ENCODE measurements at regions of chr16 and their contacts with region 1.

Region 1: GRCh38 chr16:30813821-30814189 is 26.8 kb upstream of the ZNF629 start:
- DNase-seq: no peak
- H3K4me3 Mint-ChIP-seq: peak overlapping the region; percentile 77
- H3K27ac Mint-ChIP-seq: no peak overlapping the region
- H3K4me1 Mint-ChIP-seq: no peaks in the 10 kb centered on the region
- H3K27me3 Mint-ChIP-seq: no peaks in the 10 kb centered on the region
- CTCF ChIP-seq: no peak

Region 2: GRCh38 chr16:30747799-30748634 is 65.8 kb before region 1 on chr16 and contains the start of gene PHKG2:
- CTCF ChIA-PET with region 1: no interaction called
- POLR2A ChIA-PET with region 1: interaction called, 12 read pairs
- intact Hi-C with region 1: no loop called
- DNase-seq: peak; percentile 99
- H3K4me3 Mint-ChIP-seq: peak within 1 kb of the TSS; percentile 87
- H3K27ac Mint-ChIP-seq: peak within 1 kb of the TSS; percentile 86
- H3K4me1 Mint-ChIP-seq: peaks cover 30% of the 10 kb centered on the region
- H3K27me3 Mint-ChIP-seq: no peaks in the 10 kb centered on the region
- CTCF ChIP-seq: no peak
- total RNA-seq, gene PHKG2: 28.0 and 28.4 TPM in 2 replicates

Region 3: GRCh38 chr16:30775392-30776188 is 38.2 kb before region 1 on chr16:
- CTCF ChIA-PET with region 1: interaction called, 7 read pairs
- POLR2A ChIA-PET with region 1: interaction called, 5 read pairs
- intact Hi-C with region 1: loop called (anchors 5 kb)
- DNase-seq: peak; percentile 87
- H3K4me3 Mint-ChIP-seq: peak overlapping the region; percentile 85
- H3K27ac Mint-ChIP-seq: peak overlapping the region; percentile 82
- H3K4me1 Mint-ChIP-seq: peaks cover 22% of the 10 kb centered on the region
- H3K27me3 Mint-ChIP-seq: no peaks in the 10 kb centered on the region
- CTCF ChIP-seq: no peak

Region 4: GRCh38 chr16:30797670-30798309 is 16.0 kb before region 1 on chr16:
- CTCF ChIA-PET with region 1: interaction called, 47 read pairs
- POLR2A ChIA-PET with region 1: interaction called, 6 read pairs
- intact Hi-C with region 1: no loop called
- DNase-seq: no peak
- H3K4me3 Mint-ChIP-seq: no peak overlapping the region
- H3K27ac Mint-ChIP-seq: no peak overlapping the region
- H3K4me1 Mint-ChIP-seq: peaks cover 7% of the 10 kb centered on the region
- H3K27me3 Mint-ChIP-seq: no peaks in the 10 kb centered on the region
- CTCF ChIP-seq: no peak

Region 5: DNA sequence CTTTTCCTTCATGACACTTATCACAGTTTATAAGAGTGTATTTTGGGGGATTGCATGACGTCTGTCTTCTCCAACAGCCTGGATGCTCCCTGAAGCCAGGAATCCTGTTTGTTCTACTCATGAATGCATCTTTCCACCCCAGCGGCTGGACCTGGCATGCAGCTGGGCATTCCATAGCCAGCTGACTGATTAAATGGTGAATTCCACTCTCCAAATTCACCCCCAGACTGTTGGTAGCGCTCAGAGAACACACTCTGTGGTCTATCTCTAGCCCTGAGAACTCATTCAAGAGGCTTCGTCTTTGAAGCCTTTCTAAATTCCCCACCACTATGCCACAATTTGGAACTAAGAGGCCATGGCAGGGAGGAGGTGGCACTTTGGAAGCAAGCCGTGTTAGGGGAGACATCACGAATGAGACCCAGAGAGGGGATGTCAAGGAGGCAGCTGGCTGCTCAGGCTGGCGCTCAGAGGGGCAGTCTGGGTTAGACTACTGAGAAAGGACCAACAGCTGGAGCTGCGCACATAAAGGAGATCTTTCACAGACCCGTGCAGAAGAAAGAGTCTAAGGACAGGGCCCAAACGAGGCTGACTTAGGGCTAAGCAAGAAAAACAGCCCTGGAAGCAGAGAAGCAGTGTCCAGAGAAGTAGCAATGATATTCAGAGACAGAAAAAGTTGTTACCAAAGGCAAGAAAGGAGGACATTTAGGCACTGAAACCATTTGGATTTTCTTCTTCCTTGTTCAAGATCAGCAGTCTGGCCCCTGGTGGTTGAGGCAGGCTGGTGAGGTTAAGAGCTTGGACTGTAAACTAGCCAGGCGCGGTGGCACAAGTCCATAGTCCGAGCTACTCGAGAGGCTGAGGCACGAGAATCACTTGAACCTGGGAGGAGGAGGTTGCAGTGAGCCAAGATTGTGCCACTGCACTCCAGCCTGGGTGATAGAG is 15.6 kb after region 1 on chr16:
- CTCF ChIA-PET with region 1: interaction called, 18 read pairs
- POLR2A ChIA-PET with region 1: interaction called, 8 read pairs
- intact Hi-C with region 1: no loop called
- DNase-seq: no peak
- H3K4me3 Mint-ChIP-seq: no peak overlapping the region
- H3K27ac Mint-ChIP-seq: no peak overlapping the region
- H3K4me1 Mint-ChIP-seq: no peaks in the 10 kb centered on the region
- H3K27me3 Mint-ChIP-seq: peaks cover 29% of the 10 kb centered on the region
- CTCF ChIP-seq: no peak

Region 6: GRCh38 chr16:30844671-30845449 is 31.1 kb after region 1 on chr16:
- CTCF ChIA-PET with region 1: interaction called, 28 read pairs
- POLR2A ChIA-PET with region 1: interaction called, 4 read pairs
- intact Hi-C with region 1: no loop called
- DNase-seq: peak; percentile 90
- H3K4me3 Mint-ChIP-seq: no peak overlapping the region
- H3K27ac Mint-ChIP-seq: no peak overlapping the region
- H3K4me1 Mint-ChIP-seq: no peaks in the 10 kb centered on the region
- H3K27me3 Mint-ChIP-seq: no peaks in the 10 kb centered on the region
- CTCF ChIP-seq: peak; percentile 83

Region 7: GRCh38 chr16:30902029-30902972 is 88.5 kb after region 1 on chr16:
- CTCF ChIA-PET with region 1: interaction called, 11 read pairs
- POLR2A ChIA-PET with region 1: no interaction called
- intact Hi-C with region 1: no loop called
- DNase-seq: peak; percentile 57
- H3K4me3 Mint-ChIP-seq: peak overlapping the region; percentile 75
- H3K27ac Mint-ChIP-seq: peak overlapping the region; percentile 55
- H3K4me1 Mint-ChIP-seq: peaks cover under 1% of the 10 kb centered on the region
- H3K27me3 Mint-ChIP-seq: no peaks in the 10 kb centered on the region
- CTCF ChIP-seq: no peak

Region 8: GRCh38 chr16:30977502-30977901 is 163.7 kb after region 1 on chr16:
- CTCF ChIA-PET with region 1: no interaction called
- POLR2A ChIA-PET with region 1: no interaction called
- intact Hi-C with region 1: no loop called
- DNase-seq: no peak
- H3K4me3 Mint-ChIP-seq: no peak overlapping the region
- H3K27ac Mint-ChIP-seq: no peak overlapping the region
- H3K4me1 Mint-ChIP-seq: no peaks in the 10 kb centered on the region
- H3K27me3 Mint-ChIP-seq: no peaks in the 10 kb centered on the region
- CTCF ChIP-seq: peak; percentile 27

Region 9: GRCh38 chr16:31061126-31061765 is 247.4 kb after region 1 on chr16:
- CTCF ChIA-PET with region 1: no interaction called
- POLR2A ChIA-PET with region 1: no interaction called
- intact Hi-C with region 1: no loop called
- DNase-seq: no peak
- H3K4me3 Mint-ChIP-seq: no peak overlapping the region
- H3K27ac Mint-ChIP-seq: no peak overlapping the region
- H3K4me1 Mint-ChIP-seq: peaks cover 13% of the 10 kb centered on the region
- H3K27me3 Mint-ChIP-seq: no peaks in the 10 kb centered on the region
- CTCF ChIP-seq: no peak